Ascending aorta (tissue), 2 donors: ENCODE measurements at regions of chr2 and their contacts with region 1.

Region 1: DNA sequence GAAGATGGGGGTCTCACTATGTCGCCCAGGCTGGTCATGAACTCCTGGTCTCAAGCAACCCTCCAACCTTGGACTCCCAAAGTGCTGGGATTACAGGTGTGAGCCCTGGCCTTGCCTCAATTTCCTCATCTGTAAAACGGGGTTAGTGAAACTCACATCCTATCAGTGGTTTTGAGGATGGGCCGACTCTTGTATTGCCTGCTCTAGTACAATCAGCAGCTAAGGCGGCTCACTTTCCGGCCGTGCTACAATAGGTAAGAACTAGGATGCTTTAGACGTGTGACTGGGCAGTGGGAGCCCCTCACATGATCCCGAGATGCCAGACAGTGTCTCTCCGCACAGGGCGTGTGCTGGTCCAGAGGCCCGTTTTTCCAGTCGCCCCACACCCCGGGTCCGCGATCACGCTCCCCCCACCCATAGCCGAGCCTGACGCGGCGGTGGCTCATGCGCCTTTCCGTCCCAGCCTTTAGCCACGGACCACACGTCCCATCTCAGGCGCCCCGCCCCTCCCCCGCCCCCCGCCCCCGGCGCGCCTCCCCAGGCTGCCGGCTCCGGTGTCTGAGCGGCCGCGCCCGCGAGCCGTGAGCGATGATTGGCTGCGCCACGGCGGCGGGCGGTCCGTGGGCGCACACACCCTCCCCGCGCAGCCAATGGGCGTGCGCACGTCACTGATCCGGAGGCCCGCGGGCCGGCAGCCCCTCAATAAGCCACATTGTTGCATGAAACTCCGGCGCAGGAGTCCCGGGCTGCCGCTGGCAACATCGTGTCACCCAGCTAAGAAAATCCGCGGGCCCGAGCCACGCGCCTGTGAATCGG is at the start of gene HK2:
- DNase-seq: peak; percentile 54 to 91
- H3K4me3 ChIP-seq: peak within 1 kb of the TSS; percentile 71 to 81
- H3K27ac ChIP-seq: peak within 1 kb of the TSS; percentile 78 to 87
- H3K4me1 ChIP-seq: peaks cover 0 to 15% of the 10 kb centered on the region in 2 donors
- H3K27me3 ChIP-seq: no peaks in the 10 kb centered on the region
- CTCF ChIP-seq: no peak
- total RNA-seq, gene HK2: 6.8 TPM

Region 2: DNA sequence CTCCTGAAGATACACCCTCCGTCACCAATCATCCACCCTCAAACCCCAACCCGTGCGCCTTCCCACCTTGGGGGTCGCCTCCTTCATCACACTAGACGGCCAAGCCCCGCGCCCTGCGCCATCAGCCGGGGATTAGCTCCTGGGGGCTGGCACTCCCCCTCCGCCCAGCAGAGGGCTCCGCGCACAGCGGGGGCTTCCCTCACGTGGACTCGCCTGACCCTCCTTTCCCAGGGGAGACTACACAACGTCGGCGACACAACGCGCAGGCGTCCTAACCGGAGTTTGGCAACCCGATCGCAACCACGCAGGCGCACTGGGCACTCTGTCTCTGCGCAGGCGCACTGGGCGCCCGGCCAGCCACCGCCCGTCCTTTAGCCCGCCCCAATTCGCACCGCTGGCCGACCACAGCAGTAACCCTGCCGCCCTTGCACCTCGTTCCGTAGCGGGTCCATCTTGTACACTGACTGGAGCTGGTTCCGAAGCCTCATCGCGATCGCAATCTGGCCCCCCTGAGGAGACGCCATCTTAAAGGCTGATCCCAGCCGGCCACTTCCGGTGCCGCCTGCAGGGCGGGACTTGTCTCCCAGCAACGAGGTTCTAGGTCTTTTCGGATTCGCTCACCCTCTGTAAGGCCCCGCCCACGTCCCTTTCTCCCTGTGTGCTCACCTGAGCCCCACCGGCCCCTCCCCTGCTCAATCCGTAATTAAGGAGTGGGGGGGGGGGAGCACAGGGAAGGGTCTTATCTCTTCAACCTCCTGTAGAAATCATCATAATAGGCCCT is 326.3 kb before region 1 on chr2 and contains the start of gene PCGF1:
- intact Hi-C with region 1: loop called (anchors 5 kb)
- DNase-seq: peak; percentile 97 to 99
- H3K4me3 ChIP-seq: peak within 1 kb of the TSS; percentile 76 to 78
- H3K27ac ChIP-seq: peak within 1 kb of the TSS; percentile 99
- H3K4me1 ChIP-seq: peaks cover 3 to 24% of the 10 kb centered on the region in 2 donors
- H3K27me3 ChIP-seq: no peaks in the 10 kb centered on the region
- CTCF ChIP-seq: peak in 2 of 3 experiments; percentile 19 to 27
- total RNA-seq, gene PCGF1: not detected

Region 3: DNA sequence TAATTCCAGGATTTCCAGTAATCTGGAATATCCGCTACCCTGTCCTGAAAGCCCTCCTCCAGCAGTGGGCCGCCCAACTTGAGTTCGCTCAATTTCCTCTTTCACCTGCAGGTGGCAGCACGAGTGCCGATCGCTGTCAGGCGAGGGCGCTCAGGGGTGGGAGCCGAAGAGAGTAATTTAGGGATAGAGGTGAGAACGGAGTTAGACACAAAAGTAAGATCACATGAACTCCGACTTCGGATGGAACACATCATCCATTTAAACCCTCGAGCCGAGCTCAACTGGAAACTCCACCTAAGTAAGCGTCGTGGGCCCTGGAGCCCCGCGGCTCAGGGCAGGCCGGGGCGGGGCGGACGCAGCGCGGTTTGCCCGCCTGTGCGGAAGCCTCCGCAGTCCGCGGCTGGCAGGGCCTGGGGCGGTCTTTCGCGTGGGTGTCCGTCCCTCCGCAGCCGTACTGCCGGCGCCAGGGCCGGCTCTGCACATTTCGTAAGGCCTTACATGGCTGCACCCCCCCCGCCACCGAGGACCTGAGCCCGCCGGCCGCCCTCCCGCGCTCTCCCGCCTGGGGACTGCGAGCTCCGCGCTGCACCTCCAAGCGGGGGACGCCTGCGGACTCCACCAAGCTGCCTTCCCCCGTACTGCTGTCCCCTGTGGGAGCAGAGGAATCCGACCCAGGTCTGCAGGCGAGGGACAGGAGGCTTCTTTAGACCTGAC is 118.4 kb before region 1 on chr2:
- intact Hi-C with region 1: loop called (anchors 2 kb)
- DNase-seq: peak; percentile 35 to 92
- H3K4me3 ChIP-seq: peak overlapping the region; percentile 54 to 79
- H3K27ac ChIP-seq: peak overlapping the region in 1 of 2 donors; percentile 83
- H3K4me1 ChIP-seq: peaks cover 0 to 3% of the 10 kb centered on the region in 2 donors
- H3K27me3 ChIP-seq: no peaks in the 10 kb centered on the region
- CTCF ChIP-seq: peak; percentile 87 to 96 (median 89)

Region 4: GRCh38 chr2:74768401-74768914 is 65.2 kb before region 1 on chr2:
- intact Hi-C with region 1: loop called (anchors 5 kb)
- DNase-seq: no peak
- H3K4me3 ChIP-seq: no peak overlapping the region
- H3K27ac ChIP-seq: peak overlapping the region; percentile 77 to 88
- H3K4me1 ChIP-seq: peaks cover 0 to 18% of the 10 kb centered on the region in 2 donors
- H3K27me3 ChIP-seq: no peaks in the 10 kb centered on the region
- CTCF ChIP-seq: no peak

Region 5: GRCh38 chr2:74864846-74865722 is 31.5 kb after region 1 on chr2:
- intact Hi-C with region 1: loop called (anchors 2 kb)
- DNase-seq: no peak
- H3K4me3 ChIP-seq: no peak overlapping the region
- H3K27ac ChIP-seq: no peak overlapping the region
- H3K4me1 ChIP-seq: peaks cover 0 to 8% of the 10 kb centered on the region in 2 donors
- H3K27me3 ChIP-seq: no peaks in the 10 kb centered on the region
- CTCF ChIP-seq: no peak